Activated naive CD4-positive, alpha-beta T cell treated with anti-CD3 and anti-CD28 coated beads, Interleukin-2, amount 10 ng/mL, durations not matched to agents 7 days and 5 days (primary cell): ENCODE measurements at regions of chr11 and their contacts with region 1.

Region 1: DNA sequence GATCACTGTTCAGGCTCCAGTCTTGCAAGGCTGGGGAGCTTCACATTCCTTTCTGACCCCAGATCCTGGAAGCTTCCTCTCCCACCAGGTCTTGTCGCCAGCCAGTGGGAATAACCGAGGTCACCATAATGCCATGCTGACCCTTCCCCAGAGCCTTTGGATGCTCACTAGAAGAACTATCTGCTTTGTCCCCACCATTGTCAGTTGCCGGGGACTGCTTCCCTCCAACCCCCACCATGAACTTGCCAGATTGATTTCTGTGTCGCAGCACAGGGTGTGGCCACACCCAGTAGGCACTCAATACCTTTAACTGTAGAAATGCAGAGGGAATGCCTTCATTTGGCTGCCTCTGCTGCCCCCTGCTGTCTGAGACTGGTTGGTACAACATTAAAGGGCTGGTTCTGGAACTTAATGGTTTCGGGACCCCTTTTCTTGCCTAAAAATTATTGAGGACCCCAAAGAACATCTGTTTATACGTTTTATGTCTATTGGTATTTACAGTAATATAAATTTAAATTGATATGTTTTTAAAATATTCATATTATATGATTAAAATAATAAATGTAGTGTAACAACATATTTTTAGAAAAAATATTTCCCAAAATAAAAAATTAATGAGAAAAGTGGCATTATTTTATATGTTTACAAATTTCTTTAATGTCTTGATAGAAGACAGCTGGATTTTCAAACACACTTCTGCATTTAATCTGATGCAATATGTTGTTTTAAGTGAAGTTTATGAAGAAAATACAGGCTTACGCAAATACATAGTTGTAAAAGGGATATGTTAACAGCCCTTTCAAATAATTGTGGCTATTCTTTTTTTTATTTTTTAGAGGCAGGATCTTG is 6.7 kb upstream of the GDPD5 start:
- DNase-seq: peak; percentile 89
- H3K4me3 Mint-ChIP-seq: no peak overlapping the region
- H3K27ac Mint-ChIP-seq: peak overlapping the region; percentile 19
- H3K4me1 Mint-ChIP-seq: peaks cover 64% of the 10 kb centered on the region
- H3K27me3 Mint-ChIP-seq: peaks cover 26% of the 10 kb centered on the region

Region 2: GRCh38 chr11:75450826-75451821 is 81.3 kb before region 1 on chr11:
- CTCF ChIA-PET with region 1: interaction called, 174 read pairs
- DNase-seq: peak; percentile 57
- H3K4me3 Mint-ChIP-seq: no peak overlapping the region
- H3K27ac Mint-ChIP-seq: no peak overlapping the region
- H3K4me1 Mint-ChIP-seq: no peaks in the 10 kb centered on the region
- H3K27me3 Mint-ChIP-seq: peaks cover 16% of the 10 kb centered on the region

Region 3: GRCh38 chr11:75475767-75476650 is 56.4 kb before region 1 on chr11:
- CTCF ChIA-PET with region 1: interaction called, 13 read pairs
- DNase-seq: no peak
- H3K4me3 Mint-ChIP-seq: no peak overlapping the region
- H3K27ac Mint-ChIP-seq: peak overlapping the region; percentile 82
- H3K4me1 Mint-ChIP-seq: peaks cover 22% of the 10 kb centered on the region
- H3K27me3 Mint-ChIP-seq: peaks cover 1% of the 10 kb centered on the region